ENCODE measurements at regions of chr2 and their contacts with region 1.

Region 1: DNA sequence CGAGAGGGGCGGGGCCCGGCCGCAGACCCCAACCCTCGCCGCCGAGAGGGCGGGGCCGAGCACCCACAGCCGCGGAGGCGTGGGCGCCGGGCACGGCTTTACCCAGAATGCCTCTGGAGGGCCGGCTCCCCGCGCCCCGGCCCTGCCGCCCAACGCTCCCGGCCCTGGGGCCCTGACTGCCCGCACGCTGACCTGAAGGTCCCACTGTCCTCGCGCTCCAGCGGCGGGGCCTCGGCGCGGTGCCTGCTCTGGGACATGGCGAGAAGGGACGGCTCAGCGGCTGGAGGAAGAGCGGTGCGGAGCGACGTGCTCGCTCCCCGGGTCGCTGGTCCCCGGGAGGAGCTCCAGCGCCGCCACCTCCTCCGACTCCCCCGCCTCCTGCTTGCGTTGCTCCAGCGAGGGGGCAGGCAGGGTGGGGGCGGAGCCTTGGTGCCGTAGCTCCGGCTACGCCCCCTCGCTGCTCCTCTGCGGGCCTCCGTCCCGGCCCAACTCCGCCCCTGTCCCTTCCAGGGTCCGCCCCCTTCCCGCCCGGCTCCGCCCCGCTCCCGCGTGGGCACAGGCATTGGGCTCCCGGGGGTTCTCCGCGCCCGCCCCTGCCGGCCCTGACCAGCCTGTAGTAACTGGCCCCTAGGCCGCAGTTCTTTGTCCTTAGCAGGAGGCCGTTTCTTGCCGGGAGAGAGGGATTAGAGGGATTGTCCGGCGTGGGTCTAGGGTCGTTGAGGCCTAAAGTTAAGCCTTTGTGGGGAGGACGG is at the starts of genes PJVK and PRKRA:
- DNase-seq: peak; percentile 95
- H3K4me3 Mint-ChIP-seq: peak within 1 kb of the TSS; percentile 83
- H3K27ac Mint-ChIP-seq: peak within 1 kb of the TSS; percentile 87
- H3K4me1 Mint-ChIP-seq: peaks cover 30% of the 10 kb centered on the region
- H3K27me3 Mint-ChIP-seq: peaks cover 5% of the 10 kb centered on the region
- total RNA-seq, gene PJVK: 0.91 to 1.1 TPM
- total RNA-seq, gene PRKRA: 35.4 to 36.5 TPM

Region 2: DNA sequence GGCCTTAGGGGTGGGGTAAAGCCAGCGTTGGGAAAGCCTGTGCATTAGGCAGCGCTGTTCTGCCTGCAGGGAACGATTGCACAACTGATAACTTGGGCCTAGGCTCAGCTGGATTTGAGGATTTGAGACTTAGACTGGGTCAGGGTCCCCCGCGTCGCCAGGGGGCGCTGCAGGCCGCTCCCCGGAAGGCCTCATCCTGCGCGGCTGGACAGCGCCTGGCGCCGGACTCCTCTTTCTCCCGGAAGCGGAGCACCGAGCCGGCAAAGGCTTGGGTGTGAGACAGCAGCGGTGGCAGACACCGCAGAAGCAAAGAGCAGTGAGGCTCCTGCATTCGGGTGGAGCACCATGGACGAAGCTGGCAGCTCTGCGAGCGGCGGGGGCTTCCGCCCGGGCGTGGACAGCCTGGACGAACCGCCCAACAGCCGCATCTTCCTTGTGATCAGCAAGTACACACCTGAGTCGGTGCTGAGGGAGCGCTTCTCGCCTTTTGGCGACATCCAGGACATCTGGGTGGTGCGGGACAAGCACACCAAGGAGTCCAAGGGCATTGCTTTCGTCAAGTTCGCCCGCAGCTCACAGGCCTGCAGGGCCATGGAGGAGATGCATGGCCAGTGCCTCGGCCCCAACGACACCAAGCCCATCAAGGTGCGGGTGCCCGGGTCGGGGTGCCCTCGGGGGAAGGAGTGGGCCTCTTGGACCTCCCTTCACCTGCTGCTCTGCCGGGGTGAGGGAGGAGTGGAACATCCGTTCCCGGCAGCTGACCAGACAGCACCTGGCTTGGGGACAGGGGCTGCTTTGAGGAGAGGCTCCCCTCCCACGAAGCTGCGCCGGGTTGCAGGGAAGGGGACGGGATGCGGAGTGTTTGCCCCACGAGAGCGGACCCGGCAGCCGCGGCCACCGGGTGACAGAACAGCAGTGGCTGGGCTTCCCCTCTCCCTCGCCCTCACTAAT is 338.5 kb before region 1 on chr2 and contains the start of gene RBM45:
- CTCF ChIA-PET with region 1: interaction called, 4 read pairs
- POLR2A ChIA-PET with region 1: interaction called, 10 read pairs
- DNase-seq: peak; percentile 89
- H3K4me3 Mint-ChIP-seq: peak within 1 kb of the TSS; percentile 80
- H3K27ac Mint-ChIP-seq: peak within 1 kb of the TSS; percentile 89
- H3K4me1 Mint-ChIP-seq: peaks cover 26% of the 10 kb centered on the region
- H3K27me3 Mint-ChIP-seq: no peaks in the 10 kb centered on the region
- total RNA-seq, gene RBM45: 15.3 to 17.8 TPM

Region 3: DNA sequence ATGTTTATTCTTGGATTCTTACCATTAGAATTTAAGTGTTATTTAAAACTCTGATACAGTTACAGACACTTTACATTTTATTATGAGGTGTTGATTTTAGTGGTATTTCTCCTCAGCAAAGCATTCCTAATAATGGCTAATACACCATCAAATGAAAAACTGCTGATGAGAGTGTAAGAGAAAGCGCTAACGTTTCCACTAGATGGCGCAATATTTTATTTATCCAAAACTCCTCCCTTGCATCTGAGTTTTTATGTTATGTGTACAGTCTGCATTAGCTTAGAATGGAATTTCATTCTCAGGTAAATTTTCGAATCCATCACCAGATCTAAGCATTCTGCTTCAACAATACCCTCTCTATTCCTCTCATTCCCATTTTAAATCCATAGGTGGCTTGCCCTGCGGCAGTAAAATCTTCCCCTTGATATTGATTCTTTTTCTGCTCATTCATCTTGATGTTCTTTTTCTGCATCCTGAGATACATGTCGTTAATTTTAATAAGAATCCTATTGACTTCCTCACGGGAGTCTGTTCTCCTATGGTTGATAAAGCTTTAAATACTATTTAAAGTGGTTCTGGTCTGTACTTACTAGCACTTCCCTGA is 53.8 kb before region 1 on chr2:
- CTCF ChIA-PET with region 1: interaction called, 29 read pairs
- POLR2A ChIA-PET with region 1: interaction called, 3 read pairs
- DNase-seq: no peak
- H3K4me3 Mint-ChIP-seq: no peak overlapping the region
- H3K27ac Mint-ChIP-seq: no peak overlapping the region
- H3K4me1 Mint-ChIP-seq: peaks cover 10% of the 10 kb centered on the region
- H3K27me3 Mint-ChIP-seq: peaks cover 12% of the 10 kb centered on the region

Region 4: DNA sequence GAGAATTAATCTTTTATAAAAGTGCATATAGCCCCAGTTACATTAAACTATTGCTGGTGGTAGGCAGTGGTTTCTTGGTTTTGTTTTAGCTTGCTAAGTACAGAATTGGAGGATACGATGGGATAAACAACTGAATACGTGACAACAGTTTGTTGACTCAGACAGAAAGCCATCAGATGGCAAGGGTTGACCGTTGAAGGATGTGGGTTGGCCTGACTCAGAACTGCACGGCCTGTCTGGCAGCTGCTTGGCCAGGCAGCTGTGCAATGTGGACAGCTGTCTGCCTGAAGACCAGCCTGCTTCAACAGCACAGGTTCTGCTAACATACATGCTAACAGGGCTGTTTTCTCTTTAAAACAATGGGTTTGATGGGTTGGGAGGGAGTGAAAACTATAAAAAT is 46.6 kb before region 1 on chr2:
- CTCF ChIA-PET with region 1: interaction called, 4 read pairs
- POLR2A ChIA-PET with region 1: interaction called, 23 read pairs
- DNase-seq: peak; percentile 81
- H3K4me3 Mint-ChIP-seq: peak overlapping the region; percentile 48
- H3K27ac Mint-ChIP-seq: peak overlapping the region; percentile 93
- H3K4me1 Mint-ChIP-seq: peaks cover 43% of the 10 kb centered on the region
- H3K27me3 Mint-ChIP-seq: no peaks in the 10 kb centered on the region

Region 5: GRCh38 chr2:178478439-178479274 is 27.7 kb after region 1 on chr2 and contains the start of gene FKBP7:
- CTCF ChIA-PET with region 1: interaction called, 5 read pairs
- POLR2A ChIA-PET with region 1: interaction called, 14 read pairs
- DNase-seq: peak; percentile 87
- H3K4me3 Mint-ChIP-seq: peak within 1 kb of the TSS; percentile 95
- H3K27ac Mint-ChIP-seq: peak within 1 kb of the TSS; percentile 99
- H3K4me1 Mint-ChIP-seq: peaks cover 47% of the 10 kb centered on the region
- H3K27me3 Mint-ChIP-seq: no peaks in the 10 kb centered on the region
- total RNA-seq, gene FKBP7: 1.6 to 1.8 TPM

Region 6: DNA sequence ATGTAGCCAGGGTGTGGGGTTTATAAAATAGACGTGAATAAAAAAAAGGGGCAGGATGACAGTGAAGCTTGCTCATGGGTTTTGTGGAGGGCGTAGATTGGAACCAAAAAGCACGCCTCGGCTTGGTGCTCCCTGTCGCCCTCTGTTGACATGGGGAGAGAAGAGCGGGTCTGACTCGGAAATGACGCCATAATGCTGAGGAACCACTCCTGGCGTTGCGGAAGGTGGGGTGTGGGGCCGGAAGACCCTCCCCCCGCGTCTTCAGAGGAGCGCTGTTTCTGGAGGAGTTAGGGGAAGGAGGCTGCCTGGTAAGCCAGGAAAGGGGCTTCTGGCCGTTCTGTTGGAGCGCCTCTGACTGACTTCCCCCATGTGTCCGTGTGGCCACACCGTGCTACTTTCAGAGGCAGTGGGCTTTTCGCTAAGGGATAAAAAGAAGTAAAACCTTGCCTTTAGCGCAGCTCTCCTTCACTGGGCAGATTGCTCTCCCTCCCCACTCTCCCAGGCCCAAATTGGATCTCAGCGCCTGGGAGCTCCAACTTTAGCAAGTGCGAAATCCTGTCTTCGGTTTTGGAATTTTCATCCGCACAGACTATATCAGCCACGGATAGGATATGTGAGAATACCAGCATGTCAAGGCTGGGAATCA is 72.1 kb after region 1 on chr2:
- CTCF ChIA-PET with region 1: interaction called, 9 read pairs
- POLR2A ChIA-PET with region 1: interaction called, 11 read pairs
- DNase-seq: peak; percentile 88
- H3K4me3 Mint-ChIP-seq: peak overlapping the region; percentile 89
- H3K27ac Mint-ChIP-seq: peak overlapping the region; percentile 80
- H3K4me1 Mint-ChIP-seq: peaks cover 57% of the 10 kb centered on the region
- H3K27me3 Mint-ChIP-seq: no peaks in the 10 kb centered on the region

Measured in activated CD4-positive, alpha-beta memory T cell treated with anti-CD3 and anti-CD28 coated beads, Interleukin-2, amount 10 ng/mL, durations not matched to agents 7 days and 5 days (primary cell).